Tibial artery (tissue), 4 donors: ENCODE measurements at regions of chr14 and their contacts with region 1.

Region 1: DNA sequence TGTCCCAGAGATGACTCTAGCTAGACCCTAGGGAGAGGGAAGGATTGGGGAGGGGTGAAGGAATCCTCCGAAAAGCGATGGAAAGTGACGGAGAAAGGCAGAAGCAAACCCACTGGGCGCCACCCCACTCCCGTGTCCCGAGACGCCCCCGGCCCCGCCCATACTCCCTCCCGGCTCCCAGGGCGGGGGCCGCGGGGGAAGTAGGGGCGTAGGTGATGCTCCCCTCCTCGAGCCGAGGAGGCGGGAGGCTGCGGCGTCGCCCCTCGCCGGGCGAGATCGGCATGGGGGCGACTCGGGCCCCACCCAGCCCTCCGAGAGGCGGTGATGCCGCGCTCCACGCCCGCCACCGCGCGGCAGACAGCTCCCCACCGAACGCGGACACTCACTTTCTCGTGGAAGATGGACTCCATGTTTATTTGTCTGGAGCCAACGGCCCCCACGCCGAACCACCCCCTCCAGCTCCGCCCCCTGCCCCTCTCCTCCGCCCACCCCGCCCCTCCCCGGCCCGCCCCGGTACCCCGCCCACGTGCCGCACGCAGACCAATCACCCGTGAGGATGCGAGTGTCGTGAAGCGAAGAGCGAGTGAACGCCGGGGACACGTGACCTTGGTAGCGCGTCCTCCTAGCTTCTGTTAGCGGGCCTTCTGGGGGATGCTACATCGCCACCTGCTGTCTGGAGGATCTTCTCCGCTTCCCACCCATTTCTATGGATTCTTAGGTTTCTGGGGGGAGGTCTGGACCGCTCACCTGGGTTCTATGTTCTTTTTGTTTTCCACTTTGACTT is at the start of gene ATXN3:
- DNase-seq: peak; percentile 97 to 98
- H3K4me3 ChIP-seq: peak within 1 kb of the TSS; percentile 69 to 97
- H3K27ac ChIP-seq: peak within 1 kb of the TSS; percentile 94 to 96
- H3K4me1 ChIP-seq: peaks cover 0 to 36% (median 27%) of the 10 kb centered on the region in 4 donors
- H3K27me3 ChIP-seq: no peaks in the 10 kb centered on the region
- CTCF ChIP-seq: peak; percentile 66 to 74

Region 2: DNA sequence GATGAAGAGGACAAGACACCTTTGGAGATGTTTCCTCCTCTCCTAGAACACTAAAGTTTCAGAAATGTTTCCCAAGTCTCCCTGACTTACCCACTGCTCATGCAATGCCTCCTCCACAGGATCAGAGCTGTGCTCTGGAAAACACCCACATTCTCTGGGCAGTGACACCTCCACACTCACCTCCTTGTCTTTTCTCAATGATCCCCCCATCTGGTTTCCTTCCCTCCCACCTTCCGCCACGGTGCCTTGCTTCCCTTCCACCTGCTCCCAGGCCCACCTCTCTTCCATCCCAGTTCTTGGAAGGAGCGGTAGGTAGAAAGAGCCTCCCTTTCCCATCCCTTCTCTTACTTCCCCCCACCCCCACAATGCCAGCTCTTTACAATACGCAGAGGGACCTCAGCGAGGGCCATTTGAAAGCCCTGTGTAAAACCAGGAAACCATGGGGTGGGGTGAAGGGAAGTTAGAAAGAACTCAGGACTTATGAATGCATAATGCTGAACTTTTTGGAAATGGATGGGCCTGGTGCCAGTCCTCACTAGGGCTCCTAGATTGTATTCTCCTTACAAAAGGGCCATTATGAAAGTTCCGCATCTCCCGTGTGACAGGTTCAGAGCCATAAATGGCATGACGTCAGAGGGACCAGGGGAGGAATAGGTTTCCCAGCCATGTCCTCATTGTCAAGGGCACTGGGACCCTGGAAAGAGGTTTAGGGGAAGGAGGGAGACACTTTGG is 171.6 kb before region 1 on chr14:
- intact Hi-C with region 1: no loop called
- DNase-seq: peak in 1 of 2 donors; percentile 48
- H3K4me3 ChIP-seq: no peak overlapping the region
- H3K27ac ChIP-seq: peak overlapping the region in 1 of 2 donors; percentile 12
- H3K4me1 ChIP-seq: peaks cover 0 to 50% (median 29%) of the 10 kb centered on the region in 4 donors
- H3K27me3 ChIP-seq: no peaks in the 10 kb centered on the region
- CTCF ChIP-seq: no peak

Region 3: GRCh38 chr14:92004062-92004461 is 102.3 kb before region 1 on chr14:
- intact Hi-C with region 1: no loop called
- DNase-seq: no peak
- H3K4me3 ChIP-seq: no peak overlapping the region
- H3K27ac ChIP-seq: no peak overlapping the region
- H3K4me1 ChIP-seq: no peaks in the 10 kb centered on the region
- H3K27me3 ChIP-seq: no peaks in the 10 kb centered on the region
- CTCF ChIP-seq: no peak

Region 4: DNA sequence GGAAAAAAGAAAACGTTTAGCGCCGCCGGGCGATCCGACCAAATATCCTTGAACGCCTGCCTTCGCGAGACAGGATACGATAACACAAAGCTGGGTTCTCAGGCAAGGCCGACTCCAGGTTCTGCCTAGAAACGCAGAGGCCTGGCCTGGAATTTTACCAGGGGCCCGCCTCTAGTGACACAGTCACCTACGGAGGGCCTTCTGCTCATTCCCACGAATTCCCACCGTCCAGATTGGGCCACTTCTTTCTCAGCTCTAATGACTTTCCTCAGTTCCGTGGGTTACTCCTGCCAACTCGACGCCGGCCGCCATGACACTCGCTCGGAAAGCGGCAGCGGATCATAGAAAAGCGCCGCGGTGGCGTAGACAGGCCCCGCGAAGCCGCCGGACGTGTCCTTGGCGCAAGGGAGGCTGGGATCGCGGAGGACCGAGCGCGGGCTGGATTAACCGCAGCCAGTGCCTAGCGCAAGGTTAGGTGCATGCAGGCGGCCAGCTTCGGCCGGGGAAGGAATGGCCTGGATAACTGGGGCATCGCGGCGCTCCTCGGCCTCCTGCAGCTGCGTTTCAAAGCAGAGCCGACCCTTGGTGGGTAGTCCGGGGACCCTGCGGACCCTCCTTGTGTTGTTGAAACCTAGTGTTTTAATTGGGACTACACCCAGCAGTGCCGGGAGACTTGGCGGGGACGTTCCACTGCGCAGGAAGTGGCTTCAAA is 66.5 kb before region 1 on chr14 and contains the start of gene TRIP11:
- intact Hi-C with region 1: loop called (anchors 10 kb)
- DNase-seq: peak; percentile 92 to 96
- H3K4me3 ChIP-seq: peak within 1 kb of the TSS; percentile 80 to 93
- H3K27ac ChIP-seq: peak within 1 kb of the TSS; percentile 94 to 100
- H3K4me1 ChIP-seq: peaks cover 0 to 53% (median 31%) of the 10 kb centered on the region in 4 donors
- H3K27me3 ChIP-seq: no peaks in the 10 kb centered on the region
- CTCF ChIP-seq: no peak